ENCODE measurements at regions of chr17 and their contacts with region 1.

Region 1: GRCh38 chr17:45277216-45277849 is 15.4 kb upstream of the SPATA32 start:
- DNase-seq: peak; percentile 84 to 89
- H3K4me3 ChIP-seq: no peak overlapping the region
- H3K27ac ChIP-seq: no peak overlapping the region
- H3K4me1 ChIP-seq: peaks cover 0 to 4% (median under 1%) of the 10 kb centered on the region in 4 experiments; a peak in 1 of 7 replicates
- H3K27me3 ChIP-seq: no peaks in the 10 kb centered on the region
- CTCF ChIP-seq: peak; percentile 84 to 90 (median 89)
- EP300 ChIP-seq: no peak
- POLR2A ChIP-seq: no peak
- RAD21 ChIP-seq: peak; percentile 77 to 83

Region 2: GRCh38 chr17:45235416-45236281 is 41.7 kb before region 1 on chr17:
- CTCF ChIA-PET with region 1: interaction called, 216 read pairs
- POLR2A ChIA-PET with region 1: no interaction called
- DNase-seq: peak; percentile 80 to 92
- H3K4me3 ChIP-seq: 0 out of 8 replicates have a peak overlapping the region, but pooled peaks of 1 of the 4 experiments have one; percentile 12
- H3K27ac ChIP-seq: no peak overlapping the region
- H3K4me1 ChIP-seq: peaks cover 3 to 20% (median 10%) of the 10 kb centered on the region in 4 experiments
- H3K27me3 ChIP-seq: peaks cover 0 to 26% (median 12%) of the 10 kb centered on the region in 4 experiments; a peak in 6 of 7 replicates
- CTCF ChIP-seq: peak; percentile 81 to 95 (median 82)
- EP300 ChIP-seq: no peak
- POLR2A ChIP-seq: no peak
- RAD21 ChIP-seq: peak; percentile 47 to 63; a peak in 3 of 4 replicates

Region 3: DNA sequence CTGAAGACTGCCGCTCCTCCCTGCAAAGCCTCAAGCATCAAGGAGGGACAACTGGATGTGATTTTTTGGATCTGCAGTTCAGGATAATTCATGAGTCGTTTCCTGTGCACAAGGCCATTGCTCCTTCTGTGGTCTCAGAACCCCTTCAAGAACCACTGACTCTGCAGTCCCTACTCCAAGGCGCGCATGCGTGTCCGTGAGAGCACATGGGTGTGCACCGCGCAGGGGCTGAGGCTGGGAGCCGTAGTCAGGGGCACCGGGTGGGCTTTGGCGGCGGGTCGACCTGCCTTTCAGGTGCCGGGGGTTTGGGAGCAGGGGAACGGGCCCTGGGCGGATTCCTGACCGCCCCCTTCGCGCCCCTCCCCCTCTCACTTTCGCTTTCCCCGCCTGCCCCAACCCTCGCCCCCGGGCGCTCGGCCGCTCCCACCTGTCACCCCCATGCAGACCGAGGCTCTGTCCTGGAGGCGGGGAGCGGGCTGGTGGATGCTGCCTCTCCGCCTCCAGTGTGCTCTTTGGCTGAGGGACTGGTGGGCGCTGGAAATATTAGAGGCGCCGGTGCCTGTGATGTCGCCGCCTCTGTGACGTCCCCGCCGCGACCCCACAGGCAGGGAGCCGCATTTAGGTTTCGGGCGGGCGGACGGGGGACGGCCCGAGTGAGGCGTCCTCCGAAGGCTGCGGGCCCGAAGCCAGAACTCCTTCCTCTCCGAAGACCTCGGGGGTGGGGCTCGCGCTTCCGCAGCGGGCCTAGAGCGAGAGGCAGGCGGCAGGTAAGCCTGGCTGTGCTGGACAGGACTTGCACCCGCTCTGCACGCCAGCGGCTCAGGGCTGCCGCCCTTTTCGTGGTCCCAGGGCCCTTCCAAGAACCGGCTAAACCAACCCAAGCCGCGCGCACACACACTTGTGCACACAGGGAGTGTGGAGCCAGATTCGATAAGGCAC is 15.5 kb before region 1 on chr17 and contains the start of gene SPATA32:
- CTCF ChIA-PET with region 1: interaction called, 85 read pairs
- POLR2A ChIA-PET with region 1: no interaction called
- DNase-seq: peak in 1 of 2 experiments; percentile 83
- H3K4me3 ChIP-seq: peak within 1 kb of the TSS; percentile 52 to 69 (median 60)
- H3K27ac ChIP-seq: 0 out of 2 replicates have a peak within 1 kb of the TSS, but pooled peaks have one; percentile 40
- H3K4me1 ChIP-seq: peaks cover 4 to 14% (median 8%) of the 10 kb centered on the region in 4 experiments
- H3K27me3 ChIP-seq: peaks cover 0 to 5% (median 2%) of the 10 kb centered on the region in 4 experiments; a peak in 3 of 7 replicates
- CTCF ChIP-seq: no peak
- EP300 ChIP-seq: 0 out of 3 replicates have a peak, but pooled peaks of 1 of the 2 experiments have one; percentile 31
- POLR2A ChIP-seq: peak in 1 of 2 experiments; percentile 15; a peak in 1 of 3 replicates
- RAD21 ChIP-seq: no peak
- total RNA-seq, gene SPATA32: not detected in 2 replicates

Region 4: GRCh38 chr17:45299339-45299738 is 22.0 kb after region 1 on chr17:
- CTCF ChIA-PET with region 1: interaction called, 10 read pairs
- POLR2A ChIA-PET with region 1: no interaction called
- DNase-seq: no peak
- H3K4me3 ChIP-seq: no peak overlapping the region
- H3K27ac ChIP-seq: no peak overlapping the region
- H3K4me1 ChIP-seq: no peaks in the 10 kb centered on the region
- H3K27me3 ChIP-seq: no peaks in the 10 kb centered on the region
- CTCF ChIP-seq: no peak
- EP300 ChIP-seq: no peak
- POLR2A ChIP-seq: no peak
- RAD21 ChIP-seq: no peak

Region 5: GRCh38 chr17:45317112-45317928 is 40.0 kb after region 1 on chr17:
- CTCF ChIA-PET with region 1: interaction called, 47 read pairs
- POLR2A ChIA-PET with region 1: interaction called, 3 read pairs
- DNase-seq: peak; percentile 99
- H3K4me3 ChIP-seq: peak overlapping the region; percentile 49 to 84 (median 76)
- H3K27ac ChIP-seq: no peak overlapping the region; the same call in 1 of the 2 replicates
- H3K4me1 ChIP-seq: peaks cover 0 to 5% (median 3%) of the 10 kb centered on the region in 4 experiments; a peak in 6 of 7 replicates
- H3K27me3 ChIP-seq: peaks cover 0 to 2% (median 0%) of the 10 kb centered on the region in 4 experiments; a peak in 3 of 7 replicates
- CTCF ChIP-seq: no peak
- EP300 ChIP-seq: no peak
- POLR2A ChIP-seq: 0 out of 3 replicates have a peak, but pooled peaks of 1 of the 2 experiments have one; percentile 14
- RAD21 ChIP-seq: no peak; a peak in 1 of 4 replicates

Measured in H1 (cell line).